Activated T-helper 2 cell treated with anti-CD3 and anti-CD28 coated beads, Interferon-gamma antibody, Interleukin-2, Interleukin-4, amounts not matched to agents 10 μg/mL and 5 μg/mL and 100 μg/mL, durations not matched to agents 14 hours and 24 hours and 36 hours (primary cell): ENCODE measurements at regions of chr15 and their contacts with region 1.

Region 1: DNA sequence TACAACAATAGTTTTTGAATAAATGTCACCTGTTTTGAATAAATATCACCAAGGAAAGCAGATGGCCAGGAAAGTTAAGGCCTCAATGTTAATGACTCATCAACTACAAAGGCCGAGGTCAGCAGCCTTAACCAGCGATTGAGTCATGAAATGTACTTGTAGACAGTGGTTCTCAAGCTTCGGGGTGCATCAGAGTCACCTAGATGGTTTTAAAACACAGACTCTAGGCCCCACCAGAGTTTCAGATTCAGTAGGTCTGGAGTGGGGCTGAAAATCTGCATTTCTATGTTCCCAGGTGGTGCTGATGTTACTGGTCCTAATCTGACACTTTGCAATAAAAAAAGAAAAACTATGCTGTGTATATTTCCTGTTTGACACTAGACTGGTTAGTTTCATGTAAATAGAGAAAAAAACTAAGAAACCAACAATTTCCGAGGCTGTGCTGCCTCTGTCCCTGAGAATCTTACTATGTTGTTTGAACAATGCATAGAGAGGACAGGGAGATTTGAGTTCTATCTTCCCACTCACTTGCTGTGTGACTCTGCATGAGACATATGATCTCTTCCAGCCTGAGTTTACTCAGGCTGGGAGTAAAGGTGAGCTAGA is 9.8 kb downstream of the RAB27A start:
- DNase-seq: peak; percentile 46
- H3K4me3 Mint-ChIP-seq: peak overlapping the region; percentile 63
- H3K27ac Mint-ChIP-seq: peak overlapping the region; percentile 98
- H3K4me1 Mint-ChIP-seq: peaks cover 88% of the 10 kb centered on the region
- H3K27me3 Mint-ChIP-seq: no peaks in the 10 kb centered on the region

Region 2: DNA sequence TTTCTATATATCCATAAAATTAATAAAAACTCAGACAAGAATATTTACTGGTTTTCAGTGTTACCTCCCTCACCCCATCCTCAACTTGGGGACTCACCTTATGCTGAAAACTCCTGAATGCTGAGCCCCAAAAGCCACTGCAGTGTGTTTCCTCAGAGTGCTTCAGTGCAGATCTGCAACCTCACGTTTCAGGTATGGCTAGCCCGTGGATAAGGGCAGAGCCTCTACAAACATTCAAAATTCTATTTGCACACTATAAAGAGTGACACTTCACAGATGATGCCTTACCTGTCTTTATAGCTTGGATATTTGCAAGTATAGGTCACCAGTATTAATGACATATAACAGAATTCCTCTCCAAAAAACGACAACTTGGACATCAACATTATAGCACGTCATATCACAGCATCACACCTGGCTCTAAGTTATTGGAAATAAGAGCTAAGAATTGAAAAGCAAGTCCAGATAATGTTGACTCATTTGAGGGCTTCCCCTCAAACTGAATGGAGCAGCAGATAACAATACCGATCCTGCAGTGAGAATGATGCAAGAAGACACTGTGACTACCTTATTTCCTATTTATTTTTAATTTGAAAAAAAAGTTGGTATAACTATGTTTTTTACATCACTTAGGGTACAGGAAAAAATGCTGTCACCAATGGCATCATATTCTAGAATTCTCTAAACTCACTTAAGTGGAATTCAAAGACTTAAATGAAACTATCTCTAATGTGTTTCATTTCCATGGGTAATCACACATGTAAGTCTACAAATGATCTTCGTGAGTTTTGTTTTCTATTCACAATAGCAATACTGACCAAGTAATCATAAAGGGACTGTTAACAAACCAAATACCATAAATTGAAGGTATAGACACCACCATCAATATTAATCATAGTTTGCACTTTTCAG is 42.4 kb before region 1 on chr15:
- intact Hi-C with region 1: loop called (anchors 1 kb)
- DNase-seq: no peak
- H3K4me3 Mint-ChIP-seq: peak overlapping the region; percentile 22
- H3K27ac Mint-ChIP-seq: peak overlapping the region; percentile 84
- H3K4me1 Mint-ChIP-seq: peaks cover 56% of the 10 kb centered on the region
- H3K27me3 Mint-ChIP-seq: no peaks in the 10 kb centered on the region

Region 3: DNA sequence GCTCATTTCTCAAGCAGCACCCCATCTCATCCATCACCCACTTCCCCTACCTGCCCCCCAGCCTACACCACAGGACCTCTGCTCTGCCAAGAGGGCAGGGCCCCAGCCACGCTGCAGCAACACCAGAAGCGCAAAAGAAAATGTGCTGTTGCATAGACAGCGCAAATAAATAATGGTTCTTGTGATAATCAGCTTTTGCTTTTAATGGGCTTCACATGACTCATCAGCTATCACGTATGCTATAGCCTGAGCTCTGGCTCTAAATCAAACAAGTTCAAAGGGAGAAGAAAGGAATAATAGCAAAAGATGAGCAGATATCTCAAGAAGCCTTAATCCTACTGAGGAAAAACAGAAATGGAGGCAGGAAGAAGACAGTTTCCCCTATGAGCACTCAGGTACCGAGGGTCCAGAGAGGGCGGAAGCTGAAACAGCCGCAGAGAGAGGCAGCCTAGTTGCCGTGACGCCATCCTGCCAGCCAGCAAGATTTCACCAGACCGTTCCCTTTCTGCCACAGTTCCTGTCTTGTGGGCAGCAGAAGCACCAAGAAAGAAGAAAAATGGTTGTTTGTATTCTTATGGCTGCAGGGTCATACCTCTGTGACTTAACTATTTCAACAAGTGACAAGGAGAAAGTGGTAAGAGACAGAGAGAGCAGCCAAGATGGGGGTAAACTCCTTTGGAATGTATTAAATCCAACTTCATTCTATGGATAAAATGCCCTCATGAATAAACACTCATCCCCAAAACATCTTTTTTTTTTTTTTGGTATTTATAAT is 12.3 kb before region 1 on chr15:
- intact Hi-C with region 1: loop called (anchors 1 kb)
- DNase-seq: peak; percentile 59
- H3K4me3 Mint-ChIP-seq: peak overlapping the region; percentile 62
- H3K27ac Mint-ChIP-seq: peak overlapping the region; percentile 91
- H3K4me1 Mint-ChIP-seq: peaks cover 64% of the 10 kb centered on the region
- H3K27me3 Mint-ChIP-seq: no peaks in the 10 kb centered on the region

Region 4: GRCh38 chr15:55318588-55319494 is 39.0 kb after region 1 on chr15 and contains the starts of genes PIGB and PIGBOS1:
- intact Hi-C with region 1: loop called (anchors 5 kb)
- DNase-seq: peak; percentile 82
- H3K4me3 Mint-ChIP-seq: peak within 1 kb of the TSS; percentile 100
- H3K27ac Mint-ChIP-seq: peak within 1 kb of the TSS; percentile 98
- H3K4me1 Mint-ChIP-seq: peaks cover 52% of the 10 kb centered on the region
- H3K27me3 Mint-ChIP-seq: no peaks in the 10 kb centered on the region
- total RNA-seq, gene PIGB: 19.7 and 21.0 TPM in 2 replicates
- total RNA-seq, gene PIGBOS1: 9.5 and 12.3 TPM in 2 replicates